ENCODE measurements at regions of chr7 and their contacts with region 1.

Region 1: GRCh38 chr7:100126931-100127865 is at the start of gene MBLAC1:
- DNase-seq: peak in 1 of 2 experiments; percentile 94
- H3K4me3 ChIP-seq: peak within 1 kb of the TSS; percentile 84 to 90 (median 88)
- H3K27ac ChIP-seq: peak within 1 kb of the TSS; percentile 90
- H3K4me1 ChIP-seq: peaks cover 0 to 8% (median 0%) of the 10 kb centered on the region in 4 experiments; a peak in 1 of 7 replicates
- H3K27me3 ChIP-seq: peaks cover 0 to 11% (median 0%) of the 10 kb centered on the region in 4 experiments; a peak in 2 of 7 replicates
- CTCF ChIP-seq: no peak
- EP300 ChIP-seq: peak in 1 of 2 experiments; percentile 98; a peak in 2 of 3 replicates
- POLR2A ChIP-seq: peak; percentile 0 to 78
- RAD21 ChIP-seq: no peak
- total RNA-seq, gene MBLAC1: 1.7 TPM in 2 replicates

Region 2: DNA sequence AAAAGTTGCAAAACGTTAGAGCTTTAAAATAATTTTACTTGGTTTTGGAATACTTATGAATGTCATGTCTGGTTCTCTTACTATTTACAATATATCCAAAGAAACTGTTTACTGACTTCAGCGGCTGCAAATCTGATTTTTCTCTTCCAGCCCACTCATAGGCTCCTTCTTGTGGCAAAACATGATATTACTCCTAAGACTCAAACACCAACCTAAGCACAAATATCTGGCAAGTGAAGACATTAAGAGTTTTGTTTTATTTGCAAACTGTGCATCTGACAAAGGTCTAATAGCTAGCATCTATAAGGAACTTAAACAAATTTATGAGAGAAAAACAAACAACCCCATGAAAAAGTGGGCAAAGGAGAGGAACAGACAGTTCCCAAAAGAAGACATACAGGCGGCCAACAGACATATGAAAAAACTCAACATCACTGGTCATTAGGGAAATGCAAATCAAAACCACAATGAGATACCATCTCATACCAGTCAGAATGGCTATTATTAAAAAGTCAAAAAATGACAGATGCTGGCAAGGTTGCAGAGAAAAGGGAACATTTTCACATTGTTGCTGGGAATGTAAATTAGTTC is 177.5 kb before region 1 on chr7:
- CTCF ChIA-PET with region 1: no interaction called
- POLR2A ChIA-PET with region 1: no interaction called
- DNase-seq: no peak
- H3K4me3 ChIP-seq: no peak overlapping the region
- H3K27ac ChIP-seq: no peak overlapping the region
- H3K4me1 ChIP-seq: peaks cover 4 to 6% (median 5%) of the 10 kb centered on the region in 4 experiments; a peak in 5 of 7 replicates
- H3K27me3 ChIP-seq: no peaks in the 10 kb centered on the region
- CTCF ChIP-seq: peak in 2 of 3 experiments; percentile 35 to 49; a peak in 2 of 4 replicates
- EP300 ChIP-seq: no peak
- POLR2A ChIP-seq: no peak
- RAD21 ChIP-seq: peak; percentile 48 to 58

Region 3: DNA sequence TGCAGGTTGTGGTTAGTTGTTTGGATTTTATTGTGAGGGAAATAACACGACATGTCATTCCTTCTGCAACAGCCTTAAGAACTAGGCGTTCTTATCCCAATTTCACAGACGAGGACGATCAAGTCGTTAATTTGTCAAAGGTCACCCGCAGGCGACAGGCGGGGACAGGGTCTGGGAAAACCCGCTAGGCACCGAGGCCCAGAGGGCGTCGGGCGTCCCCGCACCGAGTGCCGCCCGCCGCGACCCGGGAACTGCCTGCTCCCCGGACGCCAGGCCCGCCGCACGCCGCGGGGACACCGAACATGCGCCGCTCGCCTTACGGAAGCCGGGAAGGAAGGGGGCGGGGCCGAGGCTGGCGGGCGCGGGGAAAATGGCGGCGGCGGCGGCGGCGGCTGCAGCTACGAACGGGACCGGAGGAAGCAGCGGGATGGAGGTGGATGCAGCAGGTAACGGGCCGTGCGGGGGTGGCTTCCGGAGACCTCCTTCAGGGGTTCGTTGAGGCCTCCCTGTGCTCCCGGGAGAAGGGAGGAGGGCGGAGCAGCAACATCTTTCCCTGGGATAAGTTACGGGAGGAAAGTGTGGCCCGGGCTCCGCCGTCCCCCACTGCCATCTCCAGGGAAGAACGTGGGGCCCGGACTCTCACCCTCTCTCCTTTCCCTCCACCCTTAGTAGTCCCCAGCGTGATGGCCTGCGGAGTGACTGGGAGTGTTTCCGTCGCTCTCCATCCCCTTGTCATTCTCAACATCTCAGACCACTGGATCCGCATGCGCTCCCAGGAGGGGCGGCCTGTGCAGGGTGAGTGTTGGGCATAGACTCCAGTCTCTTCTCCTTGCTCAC is 38.4 kb before region 1 on chr7 and contains the start of gene COPS6:
- CTCF ChIA-PET with region 1: interaction called, 5 read pairs
- POLR2A ChIA-PET with region 1: interaction called, 16 read pairs
- DNase-seq: peak in 1 of 2 experiments; percentile 93
- H3K4me3 ChIP-seq: peak within 1 kb of the TSS; percentile 78 to 98 (median 96)
- H3K27ac ChIP-seq: peak within 1 kb of the TSS; percentile 77
- H3K4me1 ChIP-seq: no peaks in the 10 kb centered on the region; a peak in 1 of 7 replicates
- H3K27me3 ChIP-seq: no peaks in the 10 kb centered on the region
- CTCF ChIP-seq: no peak
- EP300 ChIP-seq: peak in 1 of 2 experiments; percentile 13; a peak in 1 of 3 replicates
- POLR2A ChIP-seq: peak; percentile 54 to 83
- RAD21 ChIP-seq: no peak
- total RNA-seq, gene COPS6: 127 and 128 TPM in 2 replicates

Region 4: GRCh38 chr7:100109521-100110162 is 17.6 kb before region 1 on chr7:
- CTCF ChIA-PET with region 1: interaction called, 48 read pairs
- POLR2A ChIA-PET with region 1: interaction called, 414 read pairs
- DNase-seq: no peak
- H3K4me3 ChIP-seq: no peak overlapping the region
- H3K27ac ChIP-seq: no peak overlapping the region
- H3K4me1 ChIP-seq: no peaks in the 10 kb centered on the region; a peak in 1 of 7 replicates
- H3K27me3 ChIP-seq: no peaks in the 10 kb centered on the region
- CTCF ChIP-seq: peak in 2 of 3 experiments; percentile 24 to 37; a peak in 2 of 4 replicates
- EP300 ChIP-seq: no peak
- POLR2A ChIP-seq: no peak
- RAD21 ChIP-seq: no peak

Region 5: DNA sequence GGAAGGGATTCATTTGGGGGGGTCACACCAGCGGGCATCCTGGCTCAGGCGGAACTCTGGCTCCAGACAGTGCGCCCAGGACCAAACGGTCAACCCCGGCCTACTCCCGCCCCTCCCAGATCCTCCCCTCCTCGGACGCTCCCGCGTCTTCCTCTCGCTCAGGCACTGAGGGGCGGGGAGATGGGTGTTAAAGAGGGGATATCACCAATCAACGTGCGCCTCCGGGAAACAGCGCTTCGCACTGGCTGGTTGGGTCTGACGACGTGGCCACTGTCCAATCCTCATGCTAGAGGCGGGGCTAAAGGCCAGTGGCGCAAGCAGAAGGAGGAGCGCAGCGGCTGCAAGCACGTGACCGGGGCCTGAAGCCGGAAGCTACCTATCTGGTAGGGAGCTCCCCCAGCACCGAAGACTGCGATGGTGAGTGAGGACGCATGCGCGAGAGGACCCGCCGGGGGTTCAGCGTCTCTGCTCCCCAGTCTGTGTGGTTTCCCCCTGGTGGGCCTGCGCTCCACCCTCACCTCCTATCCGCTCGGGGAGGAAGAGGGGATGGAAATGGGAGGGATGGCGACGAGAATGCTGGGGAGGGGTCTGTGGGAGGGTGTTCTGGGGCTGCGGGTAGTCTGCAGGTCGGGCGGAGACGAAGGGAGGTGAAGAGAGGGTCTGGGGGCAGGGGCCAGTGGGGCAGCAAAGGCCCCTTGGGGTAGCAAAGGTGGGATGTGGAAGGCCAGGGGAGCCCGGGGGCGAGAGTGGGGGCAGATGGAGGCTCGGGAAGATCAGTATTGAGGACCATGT is 21.6 kb after region 1 on chr7 and contains the start of gene LAMTOR4:
- CTCF ChIA-PET with region 1: interaction called, 108 read pairs
- POLR2A ChIA-PET with region 1: interaction called, 10 read pairs
- DNase-seq: peak; percentile 94 to 99
- H3K4me3 ChIP-seq: peak within 1 kb of the TSS; percentile 71 to 89 (median 78)
- H3K27ac ChIP-seq: no peak within 1 kb of the TSS
- H3K4me1 ChIP-seq: peaks cover 0 to 4% (median under 1%) of the 10 kb centered on the region in 4 experiments; a peak in 3 of 7 replicates
- H3K27me3 ChIP-seq: no peaks in the 10 kb centered on the region
- CTCF ChIP-seq: peak in 1 of 3 experiments; percentile 18; a peak in 2 of 4 replicates
- EP300 ChIP-seq: no peak
- POLR2A ChIP-seq: peak; percentile 38 to 69; a peak in 2 of 3 replicates
- RAD21 ChIP-seq: no peak
- total RNA-seq, gene LAMTOR4: 153 and 161 TPM in 2 replicates

Region 6: GRCh38 chr7:100171087-100171681 is 44.0 kb after region 1 on chr7:
- CTCF ChIA-PET with region 1: interaction called, 94 read pairs
- POLR2A ChIA-PET with region 1: interaction called, 10 read pairs
- DNase-seq: peak in 1 of 2 experiments; percentile 84
- H3K4me3 ChIP-seq: peak overlapping the region; percentile 47 to 67 (median 56)
- H3K27ac ChIP-seq: no peak overlapping the region
- H3K4me1 ChIP-seq: peaks cover 11 to 30% (median 19%) of the 10 kb centered on the region in 4 experiments
- H3K27me3 ChIP-seq: peaks cover 0 to 10% (median 2%) of the 10 kb centered on the region in 4 experiments; a peak in 2 of 7 replicates
- CTCF ChIP-seq: no peak
- EP300 ChIP-seq: no peak
- POLR2A ChIP-seq: 0 out of 3 replicates have a peak, but pooled peaks of 1 of the 2 experiments have one; percentile 38
- RAD21 ChIP-seq: no peak

Region 7: DNA sequence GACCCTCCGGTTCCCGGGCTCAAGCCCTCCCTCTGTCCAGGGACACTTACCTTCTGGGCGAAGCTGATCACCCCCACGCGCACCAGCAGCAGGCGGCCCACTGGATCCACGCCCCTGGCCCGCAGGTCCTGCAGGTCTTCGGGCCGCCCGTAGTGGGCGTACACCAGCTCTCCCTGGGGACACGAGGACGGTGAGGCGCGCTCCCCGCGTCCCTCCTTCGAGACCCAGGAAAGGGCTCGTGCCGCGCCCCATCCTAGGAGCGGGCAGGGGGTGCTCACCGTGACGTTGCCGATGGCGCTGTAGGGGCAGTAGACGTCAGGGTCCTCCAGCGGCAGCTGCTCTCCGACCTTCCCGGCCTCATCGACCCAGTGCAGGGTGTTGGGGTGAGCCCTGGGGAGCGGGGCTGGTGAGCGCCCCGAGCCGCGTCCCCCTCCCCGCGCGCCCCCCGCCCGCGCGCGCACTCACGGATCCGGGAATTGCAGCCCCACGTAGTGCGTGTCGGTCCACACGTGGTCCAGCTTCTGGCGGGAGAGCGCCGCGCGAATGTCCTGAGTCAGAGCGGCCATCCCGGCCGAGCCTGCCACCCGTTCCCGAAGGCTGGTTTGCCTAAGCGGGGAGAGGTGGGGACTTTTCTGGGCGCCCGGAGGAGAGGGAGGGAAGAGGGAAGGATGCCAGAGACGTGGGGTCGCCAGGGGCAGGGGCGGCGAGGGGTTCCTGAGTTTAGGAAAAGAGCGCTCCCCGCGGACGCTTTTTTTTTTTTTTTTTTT is 505.9 kb after region 1 on chr7:
- CTCF ChIA-PET with region 1: no interaction called
- POLR2A ChIA-PET with region 1: no interaction called
- DNase-seq: peak in 1 of 2 experiments; percentile 84
- H3K4me3 ChIP-seq: peak overlapping the region; percentile 60 to 89 (median 61)
- H3K27ac ChIP-seq: no peak overlapping the region
- H3K4me1 ChIP-seq: peaks cover 0 to 3% (median 3%) of the 10 kb centered on the region in 4 experiments; a peak in 5 of 7 replicates
- H3K27me3 ChIP-seq: peaks cover 0 to 16% (median 9%) of the 10 kb centered on the region in 4 experiments; a peak in 5 of 7 replicates
- CTCF ChIP-seq: peak; percentile 45 to 71 (median 63)
- EP300 ChIP-seq: no peak
- POLR2A ChIP-seq: no peak
- RAD21 ChIP-seq: peak; percentile 22 to 32; a peak in 2 of 4 replicates